Activated CD4-positive, alpha-beta T cell treated with anti-CD3 and anti-CD28 coated beads, Interleukin-2, amount 10 ng/mL, durations not matched to agents 24 days and 14 days (primary cell): ENCODE measurements at regions of chr2 and their contacts with region 1.

Region 1: GRCh38 chr2:174465327-174465726 is 21.5 kb downstream of the GPR155 start:
- DNase-seq: no peak
- H3K4me3 Mint-ChIP-seq: no peak overlapping the region
- H3K27ac Mint-ChIP-seq: no peak overlapping the region
- H3K4me1 Mint-ChIP-seq: no peaks in the 10 kb centered on the region
- H3K27me3 Mint-ChIP-seq: no peaks in the 10 kb centered on the region

Region 2: GRCh38 chr2:174078275-174078674 is 387.1 kb before region 1 on chr2:
- intact Hi-C with region 1: no loop called
- DNase-seq: no peak
- H3K4me3 Mint-ChIP-seq: no peak overlapping the region
- H3K27ac Mint-ChIP-seq: no peak overlapping the region
- H3K4me1 Mint-ChIP-seq: no peaks in the 10 kb centered on the region
- H3K27me3 Mint-ChIP-seq: no peaks in the 10 kb centered on the region

Region 3: GRCh38 chr2:174522553-174522952 is 57.2 kb after region 1 on chr2:
- intact Hi-C with region 1: loop called (anchors 1 kb)
- DNase-seq: no peak
- H3K4me3 Mint-ChIP-seq: no peak overlapping the region
- H3K27ac Mint-ChIP-seq: no peak overlapping the region
- H3K4me1 Mint-ChIP-seq: peaks cover 12% of the 10 kb centered on the region
- H3K27me3 Mint-ChIP-seq: peaks cover 14% of the 10 kb centered on the region

Region 4: GRCh38 chr2:174546581-174547506 is 81.5 kb after region 1 on chr2:
- intact Hi-C with region 1: loop called (anchors 1 kb)
- DNase-seq: peak; percentile 82
- H3K4me3 Mint-ChIP-seq: no peak overlapping the region
- H3K27ac Mint-ChIP-seq: peak overlapping the region; percentile 6
- H3K4me1 Mint-ChIP-seq: peaks cover 6% of the 10 kb centered on the region
- H3K27me3 Mint-ChIP-seq: no peaks in the 10 kb centered on the region

Region 5: GRCh38 chr2:174682578-174683391 is 217.5 kb after region 1 on chr2:
- intact Hi-C with region 1: loop called (anchors 2 kb)
- DNase-seq: peak; percentile 89
- H3K4me3 Mint-ChIP-seq: peak overlapping the region; percentile 92
- H3K27ac Mint-ChIP-seq: peak overlapping the region; percentile 97
- H3K4me1 Mint-ChIP-seq: peaks cover 50% of the 10 kb centered on the region
- H3K27me3 Mint-ChIP-seq: no peaks in the 10 kb centered on the region